Activated CD4-positive, alpha-beta memory T cell treated with anti-CD3 and anti-CD28 coated beads, Interleukin-2, amount 10 ng/mL, durations not matched to agents 7 days and 5 days (primary cell): ENCODE measurements at regions of chr4 and their contacts with region 1.

Region 1: GRCh38 chr4:147866532-147867271 is 134.8 kb downstream of the ARHGAP10 start:
- DNase-seq: peak; percentile 94
- H3K4me3 Mint-ChIP-seq: no peak overlapping the region
- H3K27ac Mint-ChIP-seq: no peak overlapping the region
- H3K4me1 Mint-ChIP-seq: peaks cover 6% of the 10 kb centered on the region
- H3K27me3 Mint-ChIP-seq: no peaks in the 10 kb centered on the region

Region 2: DNA sequence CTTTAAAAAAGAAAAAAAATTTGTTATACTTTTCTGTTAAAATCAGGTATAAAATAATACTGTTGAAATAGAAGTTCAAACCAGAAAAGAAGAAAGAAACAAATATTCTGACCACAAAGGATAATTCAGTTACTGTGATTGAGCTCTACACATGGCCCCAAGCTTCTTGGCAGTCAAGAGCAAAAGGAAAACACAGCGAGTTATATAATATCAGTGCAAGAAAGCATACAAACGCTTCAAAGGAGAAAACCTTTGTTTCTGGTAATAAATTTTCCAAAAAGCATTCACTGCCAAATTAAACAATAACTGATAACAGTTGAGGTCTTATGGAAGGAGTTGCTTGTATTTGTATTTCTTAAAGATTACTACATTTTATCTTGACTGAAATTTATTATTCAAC is 426.3 kb before region 1 on chr4:
- CTCF ChIA-PET with region 1: no interaction called
- POLR2A ChIA-PET with region 1: no interaction called
- DNase-seq: no peak
- H3K4me3 Mint-ChIP-seq: no peak overlapping the region
- H3K27ac Mint-ChIP-seq: no peak overlapping the region
- H3K4me1 Mint-ChIP-seq: no peaks in the 10 kb centered on the region
- H3K27me3 Mint-ChIP-seq: no peaks in the 10 kb centered on the region

Region 3: DNA sequence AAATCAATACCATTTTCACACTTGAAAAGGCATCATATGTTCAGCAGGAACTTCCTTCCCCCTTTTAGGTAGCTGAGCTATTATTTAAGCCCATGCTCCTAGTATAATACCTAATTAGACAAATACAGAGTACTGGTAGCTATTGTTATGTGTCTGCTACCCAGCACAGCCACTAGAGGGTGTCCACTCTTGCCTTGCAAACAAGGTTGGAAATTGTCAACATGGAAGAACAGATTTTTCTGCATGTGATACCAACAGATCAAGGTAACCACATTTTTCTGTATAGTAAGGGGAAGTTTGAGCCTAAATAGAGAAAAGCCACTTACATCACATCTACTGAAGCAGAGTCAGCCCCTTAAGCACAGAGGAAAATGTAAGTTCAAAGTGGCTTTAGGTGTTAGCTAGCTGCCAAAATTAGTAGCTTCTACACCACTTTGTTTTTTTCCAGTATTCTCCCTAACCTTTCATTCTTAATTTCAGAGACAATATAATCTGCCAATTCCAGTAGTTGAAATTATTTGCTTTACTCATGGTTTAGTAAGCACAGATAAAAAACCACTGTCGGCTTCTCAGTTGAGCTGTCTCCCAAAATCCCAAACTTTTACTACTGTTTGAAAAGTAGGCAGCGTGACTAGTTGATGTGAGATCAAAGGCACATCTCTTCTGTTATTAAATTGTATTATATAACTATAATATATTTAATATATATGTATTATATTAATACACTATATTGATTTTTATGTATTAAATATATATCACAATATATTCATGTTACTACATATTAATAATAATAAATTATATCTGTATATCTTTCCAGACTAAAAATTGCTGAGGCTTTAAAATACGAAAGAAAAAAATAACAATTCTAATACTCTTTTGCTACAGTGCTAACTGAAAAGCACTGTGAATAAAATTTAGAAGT is 347.6 kb before region 1 on chr4:
- CTCF ChIA-PET with region 1: interaction called, 64 read pairs
- POLR2A ChIA-PET with region 1: interaction called, 4 read pairs
- DNase-seq: peak; percentile 57
- H3K4me3 Mint-ChIP-seq: no peak overlapping the region
- H3K27ac Mint-ChIP-seq: no peak overlapping the region
- H3K4me1 Mint-ChIP-seq: no peaks in the 10 kb centered on the region
- H3K27me3 Mint-ChIP-seq: peaks cover 18% of the 10 kb centered on the region

Region 4: DNA sequence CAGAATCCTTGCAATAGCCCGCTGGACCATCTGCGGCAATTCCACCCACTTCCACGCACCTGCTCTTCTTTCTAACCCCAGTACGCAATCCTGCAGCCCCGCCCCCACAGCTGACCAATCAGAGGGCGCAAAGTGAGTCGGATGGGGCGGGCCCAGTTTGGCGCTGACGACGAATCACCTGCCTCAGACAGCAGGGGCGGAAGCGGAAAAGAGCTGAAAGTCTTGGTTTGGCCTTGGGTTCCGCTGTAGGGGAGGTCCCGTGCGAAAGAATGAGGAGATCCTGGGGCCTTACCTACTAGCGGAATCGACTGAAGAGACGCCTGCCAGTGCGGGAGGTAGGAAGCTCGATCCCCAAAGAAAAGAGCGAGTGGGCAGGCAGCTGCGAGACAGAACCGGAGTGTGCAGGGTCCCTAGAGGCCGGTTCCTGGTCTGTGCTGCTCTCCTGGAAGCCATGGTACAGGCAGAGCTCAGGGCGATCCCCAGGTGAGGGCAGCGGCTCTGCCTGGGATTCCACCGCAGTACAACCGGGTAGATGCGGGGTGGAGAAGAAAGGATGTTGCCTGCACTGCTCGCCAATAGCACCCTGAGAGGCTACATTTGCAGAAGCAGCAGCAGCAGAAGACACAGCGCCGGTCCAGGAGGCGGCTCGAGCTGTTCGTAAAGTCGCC is 249.4 kb before region 1 on chr4 and contains the start of gene TMEM184C:
- CTCF ChIA-PET with region 1: interaction called, 36 read pairs
- POLR2A ChIA-PET with region 1: interaction called, 7 read pairs
- DNase-seq: peak; percentile 99
- H3K4me3 Mint-ChIP-seq: peak within 1 kb of the TSS; percentile 89
- H3K27ac Mint-ChIP-seq: peak within 1 kb of the TSS; percentile 92
- H3K4me1 Mint-ChIP-seq: peaks cover 34% of the 10 kb centered on the region
- H3K27me3 Mint-ChIP-seq: peaks cover 9% of the 10 kb centered on the region
- total RNA-seq, gene TMEM184C: 16.5 to 18.8 TPM

Region 5: GRCh38 chr4:147678796-147679549 is 187.7 kb before region 1 on chr4:
- CTCF ChIA-PET with region 1: interaction called, 40 read pairs
- POLR2A ChIA-PET with region 1: interaction called, 3 read pairs
- DNase-seq: no peak
- H3K4me3 Mint-ChIP-seq: no peak overlapping the region
- H3K27ac Mint-ChIP-seq: no peak overlapping the region
- H3K4me1 Mint-ChIP-seq: peaks cover 24% of the 10 kb centered on the region
- H3K27me3 Mint-ChIP-seq: no peaks in the 10 kb centered on the region

Region 6: DNA sequence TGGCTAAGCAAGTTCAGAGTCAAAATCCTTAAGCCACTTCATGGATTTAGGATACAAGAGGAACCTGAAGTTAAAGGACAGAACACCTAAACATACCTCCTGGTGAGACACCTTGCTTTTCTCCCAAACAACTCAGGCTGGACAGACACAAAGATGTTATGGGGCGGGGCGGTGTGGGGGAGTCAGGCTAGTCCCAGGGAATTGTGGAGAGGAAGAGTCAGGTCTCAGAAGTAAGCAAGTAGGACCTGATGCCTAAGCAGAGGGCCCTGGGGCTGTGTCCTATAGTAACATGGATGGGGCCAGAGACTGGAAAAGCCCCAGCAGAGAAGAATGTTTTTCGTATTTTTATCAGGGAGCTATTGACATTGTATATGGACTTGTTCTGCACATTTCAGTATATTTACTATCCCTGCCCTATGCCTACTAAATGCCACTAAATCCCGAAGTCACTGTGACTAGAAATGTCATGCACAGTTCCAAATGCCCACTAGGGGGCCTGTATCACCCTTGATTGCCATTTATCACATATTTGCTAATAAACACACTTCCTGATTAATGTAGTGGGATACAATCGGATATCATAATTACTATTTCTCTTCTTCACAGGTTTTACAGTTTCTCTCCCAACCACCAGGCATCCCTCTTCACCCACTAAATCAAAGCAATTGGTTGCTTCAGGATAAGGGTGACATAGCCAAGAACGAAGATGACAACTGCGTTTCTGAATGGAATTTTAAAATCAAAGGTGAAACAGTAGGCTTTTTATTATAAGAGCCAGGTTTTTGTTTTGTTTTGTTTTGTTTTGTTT is 158.6 kb before region 1 on chr4:
- CTCF ChIA-PET with region 1: interaction called, 88 read pairs
- POLR2A ChIA-PET with region 1: no interaction called
- DNase-seq: peak; percentile 56
- H3K4me3 Mint-ChIP-seq: no peak overlapping the region
- H3K27ac Mint-ChIP-seq: no peak overlapping the region
- H3K4me1 Mint-ChIP-seq: peaks cover 11% of the 10 kb centered on the region
- H3K27me3 Mint-ChIP-seq: peaks cover 6% of the 10 kb centered on the region

Region 7: GRCh38 chr4:147753047-147753446 is 113.7 kb before region 1 on chr4:
- CTCF ChIA-PET with region 1: interaction called, 11 read pairs
- POLR2A ChIA-PET with region 1: no interaction called
- DNase-seq: no peak
- H3K4me3 Mint-ChIP-seq: no peak overlapping the region
- H3K27ac Mint-ChIP-seq: no peak overlapping the region
- H3K4me1 Mint-ChIP-seq: peaks cover 31% of the 10 kb centered on the region
- H3K27me3 Mint-ChIP-seq: no peaks in the 10 kb centered on the region

Region 8: DNA sequence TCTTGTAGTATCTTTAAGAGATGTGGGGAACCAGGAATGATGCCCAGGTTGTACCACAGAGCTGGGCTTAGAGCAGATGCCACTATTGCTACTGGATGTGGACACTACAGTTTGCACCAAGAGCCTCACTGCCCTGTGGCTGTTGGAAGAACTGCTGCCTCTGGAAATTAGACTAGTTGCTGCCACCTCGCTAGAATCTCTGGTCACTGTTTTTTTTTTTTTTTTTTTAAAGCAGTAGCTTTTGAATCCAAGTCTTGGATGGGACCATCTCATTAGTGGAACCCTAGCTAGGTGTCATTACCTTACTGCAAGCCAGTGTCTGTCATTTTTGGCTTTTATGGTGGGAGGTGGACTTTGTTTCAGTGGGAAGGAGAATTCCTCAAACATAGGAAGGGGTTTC is 29.3 kb before region 1 on chr4:
- CTCF ChIA-PET with region 1: interaction called, 57 read pairs
- POLR2A ChIA-PET with region 1: no interaction called
- DNase-seq: no peak
- H3K4me3 Mint-ChIP-seq: no peak overlapping the region
- H3K27ac Mint-ChIP-seq: no peak overlapping the region
- H3K4me1 Mint-ChIP-seq: peaks cover 14% of the 10 kb centered on the region
- H3K27me3 Mint-ChIP-seq: no peaks in the 10 kb centered on the region

Region 9: GRCh38 chr4:147969573-147970385 is 103.1 kb after region 1 on chr4:
- CTCF ChIA-PET with region 1: no interaction called
- POLR2A ChIA-PET with region 1: no interaction called
- DNase-seq: no peak
- H3K4me3 Mint-ChIP-seq: no peak overlapping the region
- H3K27ac Mint-ChIP-seq: no peak overlapping the region
- H3K4me1 Mint-ChIP-seq: no peaks in the 10 kb centered on the region
- H3K27me3 Mint-ChIP-seq: no peaks in the 10 kb centered on the region

Region 10: DNA sequence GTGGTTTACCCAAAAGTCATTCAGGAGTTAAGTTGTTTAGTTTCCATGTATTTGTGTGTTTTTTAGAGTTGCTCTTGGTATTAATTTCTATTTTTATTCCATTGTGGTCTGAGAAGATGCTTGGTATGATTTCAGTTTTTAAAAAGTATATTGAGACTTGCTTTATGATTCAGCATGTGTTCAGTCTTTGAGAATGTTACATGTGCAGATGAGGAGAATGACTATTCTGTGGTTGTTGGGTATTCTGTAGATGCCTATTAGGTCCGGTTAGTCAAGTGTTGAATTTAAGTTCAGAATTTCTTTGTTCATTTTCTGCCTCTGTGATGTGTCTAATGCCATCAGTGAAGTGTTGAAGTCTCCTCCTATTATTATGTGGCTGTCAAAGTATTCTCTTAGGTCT is 114.6 kb after region 1 on chr4:
- CTCF ChIA-PET with region 1: no interaction called
- POLR2A ChIA-PET with region 1: no interaction called
- DNase-seq: no peak
- H3K4me3 Mint-ChIP-seq: no peak overlapping the region
- H3K27ac Mint-ChIP-seq: no peak overlapping the region
- H3K4me1 Mint-ChIP-seq: peaks cover 31% of the 10 kb centered on the region
- H3K27me3 Mint-ChIP-seq: no peaks in the 10 kb centered on the region

Region 11: GRCh38 chr4:148196164-148196563 is 329.5 kb after region 1 on chr4:
- CTCF ChIA-PET with region 1: no interaction called
- POLR2A ChIA-PET with region 1: no interaction called
- DNase-seq: no peak
- H3K4me3 Mint-ChIP-seq: no peak overlapping the region
- H3K27ac Mint-ChIP-seq: no peak overlapping the region
- H3K4me1 Mint-ChIP-seq: no peaks in the 10 kb centered on the region
- H3K27me3 Mint-ChIP-seq: no peaks in the 10 kb centered on the region